Astrocyte of the cerebellum (primary cell): ENCODE measurements at regions of chr12 and their contacts with region 1.

Region 1: GRCh38 chr12:105575235-105575634 is 244.7 kb downstream of the C12orf75 start:
- DNase-seq: no peak
- H3K4me3 ChIP-seq: no peak overlapping the region
- CTCF ChIP-seq: no peak

Region 2: GRCh38 chr12:105443911-105444652 is 131.2 kb before region 1 on chr12:
- in situ Hi-C with region 1: no loop called
- DNase-seq: no peak
- H3K4me3 ChIP-seq: no peak overlapping the region
- CTCF ChIP-seq: no peak

Region 3: GRCh38 chr12:105474672-105475071 is 100.6 kb before region 1 on chr12:
- in situ Hi-C with region 1: no loop called
- DNase-seq: no peak
- H3K4me3 ChIP-seq: no peak overlapping the region
- CTCF ChIP-seq: no peak

Region 4: GRCh38 chr12:105523164-105524015 is 51.8 kb before region 1 on chr12:
- in situ Hi-C with region 1: no loop called
- DNase-seq: peak; percentile 85
- H3K4me3 ChIP-seq: no peak overlapping the region
- CTCF ChIP-seq: no peak

Region 5: GRCh38 chr12:105613887-105614286 is 38.7 kb after region 1 on chr12:
- in situ Hi-C with region 1: loop called (anchors 5 kb)
- DNase-seq: no peak
- H3K4me3 ChIP-seq: no peak overlapping the region
- CTCF ChIP-seq: no peak